K562 (cell line): ENCODE measurements at regions of chr11 and their contacts with region 1.

Region 1: GRCh38 chr11:49995565-49995964 is 13.2 kb upstream of the OR4C12 start:
- DNase-seq: peak; percentile 19 to 84 (median 42)
- ATAC-seq: peak; percentile 74
- H3K4me3 ChIP-seq: no peak overlapping the region
- H3K27ac ChIP-seq: no peak overlapping the region
- H3K4me1 ChIP-seq: no peaks in the 10 kb centered on the region
- H3K27me3 ChIP-seq: no peaks in the 10 kb centered on the region
- CTCF ChIP-seq: peak; percentile 56 to 71 (median 69)
- EP300 ChIP-seq: no peak
- POLR2A ChIP-seq: no peak
- RAD21 ChIP-seq: peak; percentile 26 to 80; a peak in 2 of 4 replicates

Region 2: DNA sequence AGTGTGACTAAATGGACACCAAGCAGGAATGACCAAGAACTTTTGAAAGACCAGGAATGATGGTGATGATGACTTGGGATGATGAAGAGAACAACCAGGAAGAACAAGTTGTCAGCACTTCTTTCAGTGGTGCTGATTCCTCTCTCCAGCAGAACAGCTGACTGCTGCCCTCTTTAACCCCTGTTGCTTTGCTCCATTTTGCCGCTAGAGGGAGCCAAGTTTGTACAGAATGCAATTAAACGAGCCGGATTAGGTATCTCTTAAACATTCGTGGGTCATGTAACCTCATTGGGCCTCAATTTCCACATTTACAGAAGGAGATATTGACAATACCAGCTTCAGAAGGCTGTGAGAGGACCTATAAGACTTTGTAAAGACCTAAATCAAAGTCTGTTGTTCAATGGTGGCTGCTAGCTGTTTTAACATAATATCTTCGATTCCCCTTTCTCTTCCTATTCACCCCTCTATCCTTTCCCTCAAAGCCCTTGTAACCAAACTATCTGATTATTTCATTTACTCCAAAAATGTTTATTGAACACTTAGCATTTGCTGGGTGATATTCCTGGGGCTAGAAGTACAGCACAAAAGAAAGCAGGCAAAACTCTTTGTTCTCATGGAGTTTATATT is 1687.7 kb before region 1 on chr11:
- CTCF ChIA-PET with region 1: no interaction called
- POLR2A ChIA-PET with region 1: no interaction called
- in situ Hi-C with region 1: no loop called
- intact Hi-C with region 1: loop called (anchors 10 kb)
- DNase-seq: peak; percentile 36 to 65 (median 48)
- ATAC-seq: peak; percentile 83
- H3K4me3 ChIP-seq: no peak overlapping the region
- H3K27ac ChIP-seq: no peak overlapping the region
- H3K4me1 ChIP-seq: no peaks in the 10 kb centered on the region
- H3K27me3 ChIP-seq: no peaks in the 10 kb centered on the region
- CTCF ChIP-seq: peak; percentile 70 to 78 (median 72)
- EP300 ChIP-seq: no peak
- POLR2A ChIP-seq: no peak
- RAD21 ChIP-seq: peak; percentile 66 to 81

Region 3: DNA sequence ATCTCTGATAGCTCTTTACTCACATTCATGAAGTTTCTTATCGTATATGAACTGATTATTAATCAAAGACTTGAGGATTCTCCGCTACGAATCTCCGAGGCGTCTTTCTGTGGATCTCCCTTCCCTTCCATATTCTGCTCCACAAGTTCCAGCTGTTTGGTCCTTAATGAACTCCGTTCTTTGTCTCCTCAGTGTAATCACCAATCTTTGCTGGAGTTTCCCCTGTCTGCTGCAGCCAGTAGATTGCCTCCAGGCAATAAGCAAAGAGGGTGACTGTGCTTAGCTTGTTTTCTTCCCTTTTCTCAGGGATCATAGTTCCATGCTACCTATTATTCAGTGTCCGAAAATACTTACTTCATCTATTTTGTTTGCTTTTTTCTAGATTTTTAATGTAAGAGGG is 617.6 kb before region 1 on chr11:
- CTCF ChIA-PET with region 1: no interaction called
- POLR2A ChIA-PET with region 1: no interaction called
- in situ Hi-C with region 1: loop called (anchors 25 kb)
- intact Hi-C with region 1: no loop called
- DNase-seq: no peak
- ATAC-seq: no peak
- H3K4me3 ChIP-seq: no peak overlapping the region
- H3K27ac ChIP-seq: no peak overlapping the region
- H3K4me1 ChIP-seq: no peaks in the 10 kb centered on the region
- H3K27me3 ChIP-seq: no peaks in the 10 kb centered on the region
- CTCF ChIP-seq: no peak
- EP300 ChIP-seq: no peak
- POLR2A ChIP-seq: no peak
- RAD21 ChIP-seq: no peak

Region 4: DNA sequence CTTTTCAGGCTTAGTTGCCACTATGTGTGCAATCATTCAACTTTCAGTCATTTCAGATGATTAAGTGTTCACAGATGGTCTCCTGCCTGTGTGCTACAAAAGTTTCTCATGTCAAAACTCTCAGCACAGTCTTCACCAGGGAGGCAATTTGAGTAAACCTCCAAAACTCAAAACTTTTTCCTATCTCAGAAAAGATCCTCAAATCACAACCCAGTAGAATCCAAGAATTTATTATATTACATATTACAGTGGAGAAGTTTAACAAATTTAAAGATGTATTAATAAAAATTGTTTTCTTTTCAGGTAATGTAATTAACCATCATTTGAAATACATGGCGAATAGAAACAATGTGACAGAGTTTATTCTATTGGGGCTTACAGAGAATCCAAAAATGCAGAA is 43.5 kb before region 1 on chr11 and contains the start of gene OR4C13:
- CTCF ChIA-PET with region 1: no interaction called
- POLR2A ChIA-PET with region 1: no interaction called
- in situ Hi-C with region 1: no loop called
- intact Hi-C with region 1: no loop called
- DNase-seq: no peak
- ATAC-seq: no peak
- H3K4me3 ChIP-seq: no peak within 1 kb of the TSS
- H3K27ac ChIP-seq: no peak within 1 kb of the TSS
- H3K4me1 ChIP-seq: no peaks in the 10 kb centered on the region
- H3K27me3 ChIP-seq: no peaks in the 10 kb centered on the region
- CTCF ChIP-seq: no peak
- EP300 ChIP-seq: no peak
- POLR2A ChIP-seq: no peak
- RAD21 ChIP-seq: no peak
- polyA plus RNA-seq, gene OR4C13: not detected